AG04449 (cell line): ENCODE measurements at regions of chr1 and their contacts with region 1.

Region 1: GRCh38 chr1:56709269-56709880 is 64.3 kb downstream of the PRKAA2 start:
- DNase-seq: peak; percentile 10
- H3K4me3 ChIP-seq: no peak overlapping the region
- CTCF ChIP-seq: peak; percentile 14

Region 2: GRCh38 chr1:55284852-55285251 is 1424.5 kb before region 1 on chr1:
- CTCF ChIA-PET with region 1: interaction called, 15 read pairs
- POLR2A ChIA-PET with region 1: no interaction called
- DNase-seq: no peak
- H3K4me3 ChIP-seq: no peak overlapping the region
- CTCF ChIP-seq: peak; percentile 53

Region 3: GRCh38 chr1:56584910-56585528 is 124.4 kb before region 1 on chr1:
- CTCF ChIA-PET with region 1: interaction called, 12 read pairs
- POLR2A ChIA-PET with region 1: no interaction called
- DNase-seq: peak; percentile 33
- H3K4me3 ChIP-seq: no peak overlapping the region
- CTCF ChIP-seq: peak; percentile 54

Region 4: GRCh38 chr1:56688506-56689026 is 20.8 kb before region 1 on chr1:
- CTCF ChIA-PET with region 1: interaction called, 15 read pairs
- POLR2A ChIA-PET with region 1: no interaction called
- DNase-seq: peak; percentile 9
- H3K4me3 ChIP-seq: no peak overlapping the region
- CTCF ChIP-seq: no peak

Region 5: GRCh38 chr1:56696663-56697062 is 12.7 kb before region 1 on chr1:
- CTCF ChIA-PET with region 1: interaction called, 37 read pairs
- POLR2A ChIA-PET with region 1: no interaction called
- DNase-seq: no peak
- H3K4me3 ChIP-seq: no peak overlapping the region
- CTCF ChIP-seq: no peak

Region 6: GRCh38 chr1:57137980-57138379 is 428.6 kb after region 1 on chr1:
- CTCF ChIA-PET with region 1: no interaction called
- POLR2A ChIA-PET with region 1: no interaction called
- DNase-seq: no peak
- H3K4me3 ChIP-seq: no peak overlapping the region
- CTCF ChIP-seq: no peak